ENCODE measurements at regions of chr4 and their contacts with region 1.

Region 1: DNA sequence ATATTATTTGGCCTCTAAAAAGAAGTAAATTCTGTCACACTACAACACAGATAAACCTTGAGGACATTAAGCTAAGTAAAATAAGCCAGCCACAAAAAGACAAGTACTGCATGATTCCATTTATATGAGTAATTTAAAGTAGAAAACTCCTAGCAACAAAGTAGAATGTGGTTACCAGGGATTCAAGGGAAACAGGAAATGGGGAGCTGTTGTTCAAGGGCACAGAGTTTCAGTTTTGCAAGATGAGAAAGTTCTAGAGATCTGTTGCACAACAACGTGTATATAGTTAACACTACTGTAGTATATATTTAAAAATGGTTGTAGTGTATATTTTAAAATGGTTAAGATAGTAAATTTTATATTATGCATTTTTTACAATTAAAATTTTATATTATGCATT is 25.4 kb downstream of the SEC31A start:
- DNase-seq: peak; percentile 90
- H3K4me3 ChIP-seq: no peak overlapping the region
- H3K27ac ChIP-seq: peak overlapping the region; percentile 51
- H3K4me1 ChIP-seq: peaks cover 20% of the 10 kb centered on the region
- H3K27me3 ChIP-seq: no peaks in the 10 kb centered on the region
- CTCF ChIP-seq: no peak
- POLR2A ChIP-seq: no peak

Region 2: DNA sequence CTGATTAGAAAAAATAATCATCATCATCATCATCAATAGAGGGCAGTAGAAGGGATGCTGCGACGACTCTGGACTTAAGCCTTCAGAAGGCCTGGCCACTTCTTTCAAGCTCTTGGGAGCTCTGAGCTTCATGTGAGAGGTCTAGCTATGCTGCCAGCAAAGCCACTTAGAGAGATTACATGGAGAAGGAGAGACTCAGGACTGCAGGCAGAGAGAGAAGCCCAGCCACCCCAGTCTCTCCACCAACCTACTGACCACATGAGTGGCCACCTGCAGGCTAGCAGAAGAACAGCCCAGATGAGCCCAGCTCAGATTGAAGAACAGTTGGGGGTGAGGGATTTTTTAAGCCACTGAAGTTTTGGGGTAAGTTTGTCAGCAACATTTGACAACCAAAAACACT is 286.7 kb before region 1 on chr4:
- CTCF ChIA-PET with region 1: no interaction called
- POLR2A ChIA-PET with region 1: no interaction called
- dilution Hi-C with region 1: no loop called
- intact Hi-C with region 1: no loop called
- DNase-seq: peak; percentile 14
- H3K4me3 ChIP-seq: no peak overlapping the region
- H3K27ac ChIP-seq: no peak overlapping the region
- H3K4me1 ChIP-seq: no peaks in the 10 kb centered on the region
- H3K27me3 ChIP-seq: peaks cover 0 to 1% of the 10 kb centered on the region in 2 experiments
- CTCF ChIP-seq: peak; percentile 9 to 36
- POLR2A ChIP-seq: no peak

Region 3: GRCh38 chr4:82851885-82852750 is 13.5 kb before region 1 on chr4:
- CTCF ChIA-PET with region 1: interaction called, 11 read pairs
- POLR2A ChIA-PET with region 1: interaction called, 5 read pairs
- dilution Hi-C with region 1: no loop called
- intact Hi-C with region 1: no loop called
- DNase-seq: peak; percentile 61
- H3K4me3 ChIP-seq: no peak overlapping the region
- H3K27ac ChIP-seq: no peak overlapping the region
- H3K4me1 ChIP-seq: no peaks in the 10 kb centered on the region
- H3K27me3 ChIP-seq: no peaks in the 10 kb centered on the region
- CTCF ChIP-seq: peak in 1 of 2 donors; percentile 52
- POLR2A ChIP-seq: no peak